Mammary epithelial cell (primary cell): ENCODE measurements at regions of chr21 and their contacts with region 1.

Region 1: GRCh38 chr21:46000731-46001641 is 19.4 kb downstream of the COL6A1 start:
- DNase-seq: no peak
- H3K4me3 ChIP-seq: no peak overlapping the region
- H3K27ac ChIP-seq: no peak overlapping the region
- H3K4me1 ChIP-seq: peaks cover under 1% of the 10 kb centered on the region
- H3K27me3 ChIP-seq: no peaks in the 10 kb centered on the region
- CTCF ChIP-seq: no peak

Region 2: DNA sequence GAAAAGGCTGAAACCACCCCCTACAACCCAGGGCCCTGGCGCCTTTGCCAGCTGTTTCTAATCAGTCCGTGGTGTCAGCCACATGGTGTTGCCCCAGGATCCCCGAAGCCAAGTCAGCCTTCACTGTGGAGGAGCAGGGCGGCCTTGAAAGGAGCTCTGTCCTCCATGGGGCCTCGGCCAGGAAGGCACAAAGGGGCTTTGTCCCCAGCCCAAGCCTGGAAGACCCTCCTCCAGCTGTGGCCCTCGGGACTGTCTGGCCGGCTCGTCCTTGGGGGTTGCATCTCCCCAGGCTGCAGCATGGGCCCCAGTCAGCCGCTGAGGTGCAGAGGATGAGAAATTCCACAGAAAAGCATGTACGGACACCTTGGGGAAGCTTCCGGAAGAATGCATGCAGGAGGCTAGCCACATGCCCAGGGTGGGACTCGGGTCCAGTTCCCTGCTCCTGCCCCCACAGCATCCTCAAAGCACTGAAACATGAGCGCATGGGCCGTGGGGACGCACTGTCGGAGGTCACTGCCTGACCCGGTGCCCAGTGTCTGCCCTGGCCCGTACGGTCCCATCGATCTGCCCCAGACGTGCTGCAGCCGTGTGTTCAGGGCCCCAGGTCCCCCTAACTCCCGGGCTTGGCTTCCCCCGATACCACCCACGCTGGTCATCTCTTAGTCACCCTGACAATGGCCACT is 674.7 kb before region 1 on chr21:
- CTCF ChIA-PET with region 1: no interaction called
- dilution Hi-C with region 1: no loop called
- in situ Hi-C with region 1: no loop called
- intact Hi-C with region 1: no loop called
- DNase-seq: no peak
- H3K4me3 ChIP-seq: no peak overlapping the region
- H3K27ac ChIP-seq: no peak overlapping the region
- H3K4me1 ChIP-seq: peaks cover 20% of the 10 kb centered on the region
- H3K27me3 ChIP-seq: peaks cover 2% of the 10 kb centered on the region
- CTCF ChIP-seq: no peak

Region 3: GRCh38 chr21:46052703-46053651 is 52.0 kb after region 1 on chr21:
- CTCF ChIA-PET with region 1: no interaction called
- dilution Hi-C with region 1: loop called (anchors 5 kb)
- in situ Hi-C with region 1: no loop called
- intact Hi-C with region 1: no loop called
- DNase-seq: peak; percentile 76
- H3K4me3 ChIP-seq: no peak overlapping the region
- H3K27ac ChIP-seq: no peak overlapping the region
- H3K4me1 ChIP-seq: peaks cover 41% of the 10 kb centered on the region
- H3K27me3 ChIP-seq: no peaks in the 10 kb centered on the region
- CTCF ChIP-seq: no peak

Region 4: GRCh38 chr21:46097336-46098293 is 96.6 kb after region 1 on chr21 and contains the start of gene COL6A2:
- CTCF ChIA-PET with region 1: no interaction called
- dilution Hi-C with region 1: loop called (anchors 10 kb)
- in situ Hi-C with region 1: no loop called
- intact Hi-C with region 1: no loop called
- DNase-seq: no peak
- H3K4me3 ChIP-seq: peak within 1 kb of the TSS in 1 of 3 experiments; percentile 27
- H3K27ac ChIP-seq: no peak within 1 kb of the TSS
- H3K4me1 ChIP-seq: no peaks in the 10 kb centered on the region
- H3K27me3 ChIP-seq: peaks cover 12% of the 10 kb centered on the region
- CTCF ChIP-seq: peak in 1 of 2 donors; percentile 26
- total RNA-seq, gene COL6A2: 0.87 to 47.0 TPM